Activated B cell treated with CpG ODN at 0.5 μM for 24 hours (primary cell): ENCODE measurements at regions of chr2 and their contacts with region 1.

Region 1: DNA sequence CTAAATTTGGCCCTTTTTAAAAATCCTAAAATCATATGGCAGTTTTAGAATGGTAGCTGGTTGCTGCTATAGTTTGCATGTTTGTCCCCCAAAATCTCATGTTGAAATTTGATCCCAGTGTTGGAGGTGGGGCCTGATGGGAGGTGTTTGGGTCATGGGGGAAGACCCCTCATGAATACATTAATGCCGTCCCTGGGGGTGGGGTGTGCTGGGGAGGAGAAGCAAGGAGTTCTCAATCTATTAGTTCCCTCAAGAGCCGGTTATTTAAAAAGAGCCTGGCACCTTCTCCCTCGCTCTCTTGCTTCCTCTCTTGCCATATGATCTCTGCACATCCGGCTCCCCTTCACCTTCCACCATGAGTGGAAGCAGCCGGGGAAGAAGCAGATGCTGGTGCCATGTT is 20.8 kb downstream of the GPATCH11 start:
- DNase-seq: no peak
- ATAC-seq: no peak
- H3K4me3 Mint-ChIP-seq: no peak overlapping the region
- H3K27ac Mint-ChIP-seq: peak overlapping the region; percentile 35
- H3K4me1 Mint-ChIP-seq: no peaks in the 10 kb centered on the region
- H3K27me3 Mint-ChIP-seq: no peaks in the 10 kb centered on the region
- CTCF ChIP-seq: no peak

Region 2: GRCh38 chr2:37068686-37069085 is 36.5 kb before region 1 on chr2:
- CTCF ChIA-PET with region 1: no interaction called
- POLR2A ChIA-PET with region 1: no interaction called
- intact Hi-C with region 1: loop called (anchors 5 kb)
- DNase-seq: no peak
- ATAC-seq: no peak
- H3K4me3 Mint-ChIP-seq: no peak overlapping the region
- H3K27ac Mint-ChIP-seq: no peak overlapping the region
- H3K4me1 Mint-ChIP-seq: peaks cover 15% of the 10 kb centered on the region
- H3K27me3 Mint-ChIP-seq: no peaks in the 10 kb centered on the region
- CTCF ChIP-seq: no peak